Tibial artery (tissue), 4 donors: ENCODE measurements at regions of chr5 and their contacts with region 1.

Region 1: GRCh38 chr5:67301285-67301903 is 104.8 kb upstream of the CD180 start:
- DNase-seq: peak; percentile 93 to 94
- H3K4me3 ChIP-seq: no peak overlapping the region
- H3K27ac ChIP-seq: peak overlapping the region; percentile 83
- H3K4me1 ChIP-seq: peaks cover 0 to 55% (median 33%) of the 10 kb centered on the region in 4 donors
- H3K27me3 ChIP-seq: no peaks in the 10 kb centered on the region
- CTCF ChIP-seq: no peak

Region 2: DNA sequence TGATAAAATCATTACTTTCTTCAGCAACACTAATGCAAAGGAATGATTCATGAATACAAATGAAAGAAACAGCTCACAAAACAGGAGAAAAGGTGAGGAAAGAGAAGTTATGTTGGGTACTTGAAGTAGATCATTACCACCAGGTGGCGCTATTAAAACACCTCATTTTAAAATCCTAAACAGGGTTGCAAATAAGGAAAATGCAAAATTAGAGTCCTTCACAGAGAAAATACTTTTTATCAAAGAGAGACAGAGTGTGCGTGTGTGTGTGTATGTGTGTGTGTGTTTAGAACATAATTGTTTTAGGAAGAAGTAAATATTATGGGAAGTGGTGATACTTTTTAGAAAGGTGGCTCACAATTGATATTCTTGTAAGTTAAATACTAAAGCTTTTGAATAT is 55.3 kb before region 1 on chr5:
- intact Hi-C with region 1: loop called (anchors 10 kb)
- DNase-seq: no peak
- H3K4me3 ChIP-seq: no peak overlapping the region
- H3K27ac ChIP-seq: peak overlapping the region; percentile 73 to 75
- H3K4me1 ChIP-seq: peaks cover 0 to 42% (median 28%) of the 10 kb centered on the region in 4 donors
- H3K27me3 ChIP-seq: no peaks in the 10 kb centered on the region
- CTCF ChIP-seq: peak; percentile 73 to 86

Region 3: GRCh38 chr5:67268231-67269021 is 33.0 kb before region 1 on chr5:
- intact Hi-C with region 1: loop called (anchors 5 kb)
- DNase-seq: peak; percentile 86
- H3K4me3 ChIP-seq: peak overlapping the region; percentile 15 to 41
- H3K27ac ChIP-seq: peak overlapping the region; percentile 89 to 94
- H3K4me1 ChIP-seq: peaks cover 0 to 41% (median 31%) of the 10 kb centered on the region in 4 donors
- H3K27me3 ChIP-seq: no peaks in the 10 kb centered on the region
- CTCF ChIP-seq: no peak